ENCODE measurements at regions of chr2 and their contacts with region 1.

Region 1: DNA sequence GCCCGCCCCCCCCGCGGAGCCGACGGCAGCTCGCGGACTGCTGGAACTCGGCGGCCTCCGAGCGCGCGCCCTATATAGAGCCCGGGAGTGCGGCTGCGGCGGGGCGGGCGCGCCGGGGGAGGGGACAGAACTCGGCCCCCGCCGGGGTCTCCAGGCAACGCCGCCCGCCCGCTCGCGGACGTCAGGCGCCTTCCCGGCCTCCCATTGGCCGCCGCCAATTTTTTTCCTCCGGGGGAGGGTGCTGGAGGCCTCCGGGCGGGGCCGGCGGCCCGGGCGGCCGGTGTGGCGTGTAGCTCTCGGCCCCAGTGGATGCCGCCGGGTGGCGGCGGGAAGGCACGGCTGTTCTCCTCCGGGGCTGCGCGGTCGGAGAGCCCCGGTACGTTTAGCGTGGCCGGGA is at the start of gene ZFP36L2:
- DNase-seq: peak; percentile 95
- H3K4me3 Mint-ChIP-seq: peak within 1 kb of the TSS; percentile 92
- H3K27ac Mint-ChIP-seq: peak within 1 kb of the TSS; percentile 97
- H3K4me1 Mint-ChIP-seq: peaks cover 38% of the 10 kb centered on the region
- H3K27me3 Mint-ChIP-seq: no peaks in the 10 kb centered on the region
- total RNA-seq, gene ZFP36L2: 92.3 TPM in 2 replicates

Region 2: DNA sequence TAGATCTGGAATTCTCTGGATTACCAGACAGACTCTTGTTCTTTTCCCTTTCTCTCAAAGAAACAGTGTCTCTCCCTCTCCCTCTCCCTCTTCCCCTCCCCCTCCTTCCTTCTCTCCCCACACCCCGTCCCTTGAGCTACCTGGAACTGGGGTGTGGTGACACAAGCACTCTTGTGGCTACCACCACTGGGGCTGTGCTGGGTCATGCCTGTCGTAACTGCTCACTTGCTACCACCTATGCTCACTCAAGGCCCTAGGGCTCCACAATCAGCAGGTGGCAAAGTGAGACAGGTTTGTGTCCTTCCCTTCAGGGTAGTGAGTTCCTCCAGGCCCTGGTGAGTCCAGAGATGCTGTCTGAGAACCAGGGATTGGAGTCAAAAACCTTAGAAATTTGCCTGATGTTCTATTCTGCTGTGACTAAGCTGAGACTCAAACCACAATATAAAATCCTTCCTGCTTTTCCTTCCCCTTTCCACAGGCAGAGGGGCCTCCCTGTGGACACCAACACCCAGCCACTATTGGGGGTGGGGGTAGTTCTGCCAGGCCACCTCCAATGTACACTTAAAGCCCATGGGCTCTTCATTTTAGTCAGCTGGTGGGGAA is 533.4 kb before region 1 on chr2:
- intact Hi-C with region 1: no loop called
- DNase-seq: peak; percentile 14
- H3K4me3 Mint-ChIP-seq: no peak overlapping the region
- H3K27ac Mint-ChIP-seq: peak overlapping the region; percentile 67
- H3K4me1 Mint-ChIP-seq: peaks cover 17% of the 10 kb centered on the region
- H3K27me3 Mint-ChIP-seq: no peaks in the 10 kb centered on the region

Region 3: DNA sequence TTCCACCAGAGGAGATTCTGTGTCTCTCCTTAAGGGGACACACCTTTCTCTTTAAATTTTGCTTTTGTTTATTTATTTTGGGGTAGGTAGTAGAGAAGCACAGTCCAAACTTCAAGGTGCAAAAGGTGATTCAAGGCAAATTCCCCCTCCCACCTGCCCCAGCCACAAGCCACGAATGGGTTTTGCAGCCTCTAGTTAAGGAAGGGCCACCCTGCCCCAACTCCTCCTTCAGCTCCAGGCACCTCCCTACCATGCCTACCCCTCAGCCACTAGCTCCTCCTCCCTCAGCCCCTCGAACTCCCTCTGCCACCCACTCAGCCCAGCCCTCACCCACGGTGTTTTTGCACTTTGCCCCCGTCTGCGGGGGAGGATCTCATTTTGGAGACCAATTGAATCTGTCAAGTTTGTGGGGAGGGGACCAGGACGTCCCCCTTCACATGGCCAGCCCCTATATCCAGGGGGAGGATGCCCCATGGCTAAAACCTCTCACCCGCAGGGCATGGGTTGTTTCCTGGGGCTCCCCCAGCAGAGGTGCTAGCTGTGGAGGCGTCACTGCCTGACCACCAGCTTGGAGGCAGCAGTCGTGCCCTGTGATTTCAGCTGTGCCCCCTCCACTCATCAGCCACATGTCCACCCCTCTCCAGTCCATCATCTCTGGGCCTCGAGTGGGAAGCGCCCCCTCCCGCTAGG is 438.6 kb before region 1 on chr2:
- intact Hi-C with region 1: no loop called
- DNase-seq: no peak
- H3K4me3 Mint-ChIP-seq: no peak overlapping the region
- H3K27ac Mint-ChIP-seq: no peak overlapping the region
- H3K4me1 Mint-ChIP-seq: peaks cover 5% of the 10 kb centered on the region
- H3K27me3 Mint-ChIP-seq: peaks cover 19% of the 10 kb centered on the region

Region 4: DNA sequence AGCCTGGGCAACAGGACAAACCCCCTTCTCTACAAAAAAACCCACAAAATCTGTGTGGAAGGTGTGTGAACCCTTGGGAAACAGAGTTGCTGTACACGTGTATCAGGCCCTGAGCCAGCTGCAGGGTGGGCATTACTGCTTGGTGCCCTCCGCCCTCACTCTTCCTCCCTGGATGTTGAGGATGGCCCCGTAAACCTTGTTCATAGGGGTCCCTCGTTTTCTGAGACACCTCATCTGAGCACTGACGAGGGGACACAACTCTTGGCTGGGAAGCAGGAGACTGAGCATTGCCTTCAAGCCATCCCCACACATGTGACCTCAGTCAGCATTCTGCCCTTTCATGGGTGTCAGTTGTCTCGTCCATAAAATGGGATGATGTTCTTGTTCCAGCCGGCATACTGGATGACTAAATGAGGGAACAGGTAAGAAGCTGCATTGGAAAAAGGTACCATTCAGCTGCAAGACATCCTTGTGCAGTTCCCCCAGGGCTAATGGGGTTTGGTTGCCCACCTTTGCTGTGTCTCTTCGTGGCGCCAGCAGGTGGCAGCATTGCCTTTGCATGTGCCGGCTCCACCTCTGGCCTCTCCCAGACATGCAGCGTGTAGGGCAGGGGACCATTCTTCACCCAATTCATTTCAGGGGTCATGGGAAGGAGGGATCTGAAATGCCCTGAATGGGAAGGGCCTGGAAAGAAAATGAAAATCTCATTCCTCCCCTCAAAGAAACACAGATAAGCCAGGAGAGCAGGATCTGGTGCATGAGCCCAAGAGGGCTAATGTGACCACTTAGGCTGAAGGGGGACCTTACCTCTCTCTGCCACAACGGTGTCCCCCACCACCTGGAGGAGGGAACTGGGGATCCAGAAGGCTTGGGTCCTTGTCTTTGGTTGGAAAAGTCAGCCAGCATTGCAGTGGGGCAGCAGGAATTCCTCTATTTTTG is 397.8 kb before region 1 on chr2:
- intact Hi-C with region 1: loop called (anchors 5 kb)
- DNase-seq: peak; percentile 52
- H3K4me3 Mint-ChIP-seq: no peak overlapping the region
- H3K27ac Mint-ChIP-seq: no peak overlapping the region
- H3K4me1 Mint-ChIP-seq: peaks cover 16% of the 10 kb centered on the region
- H3K27me3 Mint-ChIP-seq: peaks cover 14% of the 10 kb centered on the region

Region 5: GRCh38 chr2:42974721-42975717 is 251.5 kb before region 1 on chr2:
- intact Hi-C with region 1: loop called (anchors 1 kb)
- DNase-seq: peak; percentile 19
- H3K4me3 Mint-ChIP-seq: no peak overlapping the region
- H3K27ac Mint-ChIP-seq: no peak overlapping the region
- H3K4me1 Mint-ChIP-seq: peaks cover 11% of the 10 kb centered on the region
- H3K27me3 Mint-ChIP-seq: peaks cover 6% of the 10 kb centered on the region

Region 6: DNA sequence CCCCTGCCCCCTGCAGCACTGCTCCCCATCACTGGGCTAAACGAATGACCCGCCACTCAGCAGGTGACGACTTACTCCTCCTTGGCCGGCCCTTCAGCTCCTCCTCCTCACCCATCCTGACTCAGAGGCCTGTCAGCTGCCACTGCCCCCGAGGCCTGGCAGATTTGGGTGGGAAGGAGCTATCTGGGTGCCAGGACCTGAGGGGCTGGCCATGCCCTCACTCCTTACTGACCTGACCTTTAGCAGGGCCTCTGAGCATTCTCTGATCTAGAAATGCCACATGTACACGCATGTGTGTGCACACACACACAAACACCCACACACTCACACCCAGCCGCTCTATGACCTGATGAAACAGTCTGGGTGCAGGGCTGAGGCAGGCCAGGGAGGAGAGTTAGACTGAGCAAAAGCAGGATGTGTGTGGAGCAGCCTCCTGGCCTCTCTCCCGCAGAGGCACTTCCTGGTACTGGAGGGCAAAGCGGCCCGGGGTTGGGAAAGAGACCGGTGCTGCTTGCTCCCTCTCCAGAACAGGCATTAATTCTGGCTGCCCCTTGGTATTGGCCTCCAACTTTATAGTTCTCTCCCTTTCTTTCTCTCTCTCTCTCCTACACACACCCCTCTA is 68.2 kb before region 1 on chr2:
- intact Hi-C with region 1: loop called (anchors 1 kb)
- DNase-seq: peak; percentile 59
- H3K4me3 Mint-ChIP-seq: peak overlapping the region; percentile 74
- H3K27ac Mint-ChIP-seq: peak overlapping the region; percentile 99
- H3K4me1 Mint-ChIP-seq: peaks cover 49% of the 10 kb centered on the region
- H3K27me3 Mint-ChIP-seq: no peaks in the 10 kb centered on the region

Region 7: DNA sequence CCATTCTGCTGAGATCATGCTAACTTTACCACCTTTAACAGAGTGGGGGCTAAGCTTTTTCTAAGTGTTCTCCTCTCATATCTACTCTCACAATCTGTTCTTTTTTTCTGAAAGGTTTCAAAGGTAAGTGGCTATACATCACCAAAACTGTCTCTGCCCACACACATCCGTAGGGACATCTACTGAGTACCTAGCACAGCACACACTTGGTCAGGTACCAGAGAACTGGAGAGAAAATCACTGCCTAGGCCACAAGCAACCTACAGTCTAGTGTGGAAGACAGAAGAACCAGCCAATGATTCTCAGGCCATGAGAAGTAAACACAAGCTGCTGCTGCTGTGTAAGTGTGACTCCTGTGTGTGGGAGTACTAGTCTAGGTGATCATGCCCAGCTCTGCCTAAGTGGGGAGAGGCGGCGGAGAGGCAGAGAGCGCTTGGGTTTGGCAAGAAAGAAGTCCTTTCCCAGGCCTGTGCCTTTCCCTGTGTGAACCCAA is 175.9 kb after region 1 on chr2:
- intact Hi-C with region 1: loop called (anchors 1 kb)
- DNase-seq: no peak
- H3K4me3 Mint-ChIP-seq: no peak overlapping the region
- H3K27ac Mint-ChIP-seq: no peak overlapping the region
- H3K4me1 Mint-ChIP-seq: peaks cover 21% of the 10 kb centered on the region
- H3K27me3 Mint-ChIP-seq: no peaks in the 10 kb centered on the region

Region 8: GRCh38 chr2:43542285-43542937 is 315.9 kb after region 1 on chr2:
- intact Hi-C with region 1: loop called (anchors 1 kb)
- DNase-seq: no peak
- H3K4me3 Mint-ChIP-seq: no peak overlapping the region
- H3K27ac Mint-ChIP-seq: no peak overlapping the region
- H3K4me1 Mint-ChIP-seq: peaks cover 18% of the 10 kb centered on the region
- H3K27me3 Mint-ChIP-seq: no peaks in the 10 kb centered on the region

Region 9: GRCh38 chr2:43611987-43612894 is 385.7 kb after region 1 on chr2:
- intact Hi-C with region 1: loop called (anchors 1 kb)
- DNase-seq: peak; percentile 60
- H3K4me3 Mint-ChIP-seq: no peak overlapping the region
- H3K27ac Mint-ChIP-seq: no peak overlapping the region
- H3K4me1 Mint-ChIP-seq: peaks cover 5% of the 10 kb centered on the region
- H3K27me3 Mint-ChIP-seq: peaks cover 9% of the 10 kb centered on the region

Measured in activated T-helper 1 cell treated with anti-CD3 and anti-CD28 coated beads, Interleukin-12 subunit alpha, Interleukin-12 subunit beta, Interleukin-2, Interleukin-4 antibody, amounts not matched to agents 30 ng/mL and 10 ng/mL and 1 ng/mL, durations not matched to agents 14 hours and 24 hours and 36 hours (primary cell).